ENCODE measurements at regions of chr14 and their contacts with region 1.

Region 1: GRCh38 chr14:45267071-45267470 is 14.1 kb upstream of the MIS18BP1 start:
- DNase-seq: no peak
- H3K4me3 ChIP-seq: no peak overlapping the region
- H3K27ac ChIP-seq: no peak overlapping the region
- H3K4me1 ChIP-seq: no peaks in the 10 kb centered on the region
- H3K27me3 ChIP-seq: no peaks in the 10 kb centered on the region
- CTCF ChIP-seq: no peak
- POLR2A ChIP-seq: no peak

Region 2: DNA sequence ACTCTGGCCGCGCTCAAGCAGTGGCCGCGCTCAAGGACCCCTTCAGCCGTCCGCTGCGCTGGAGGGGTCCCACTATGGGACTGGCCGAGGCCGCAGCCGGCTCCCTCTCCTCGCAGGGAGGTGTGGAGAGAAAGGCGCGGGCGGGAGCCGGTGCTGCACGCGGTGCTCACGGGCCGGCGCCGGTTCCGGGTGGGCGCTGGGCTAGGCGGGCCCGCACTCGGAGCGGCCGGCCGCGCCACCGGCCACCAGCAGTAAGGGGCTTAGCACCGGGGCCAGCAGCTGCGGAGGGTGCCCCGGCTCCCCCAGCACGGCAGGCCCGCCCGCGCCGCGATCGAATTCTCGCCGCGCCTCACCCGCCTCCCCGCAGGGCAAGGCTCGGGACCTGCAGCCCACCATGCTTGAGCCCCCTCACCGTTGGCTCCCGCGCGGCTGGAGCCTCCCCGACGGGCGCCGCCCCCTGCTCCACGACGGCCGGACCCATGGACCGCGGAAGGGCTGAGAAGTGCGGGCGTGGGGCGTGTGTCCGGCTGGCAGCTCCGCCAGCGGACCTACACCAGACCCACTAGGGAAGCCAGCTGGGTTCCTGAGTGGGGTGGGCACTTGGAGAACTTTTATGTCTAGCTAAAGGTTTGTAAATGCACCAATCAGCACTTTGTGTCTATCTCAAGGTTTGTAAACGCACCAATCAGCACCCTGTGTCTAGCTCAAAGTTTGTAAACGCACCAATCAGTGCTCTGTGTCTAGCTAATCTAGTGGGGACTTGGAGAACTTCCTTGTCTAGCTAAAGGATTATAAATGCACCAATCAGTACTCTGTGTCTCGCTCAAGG is 354.8 kb before region 1 on chr14:
- intact Hi-C with region 1: loop called (anchors 5 to 10 kb)
- DNase-seq: peak in 2 of 7 donors; percentile 9 to 17
- H3K4me3 ChIP-seq: peak overlapping the region in 2 of 4 donors; percentile 32 to 74
- H3K27ac ChIP-seq: no peak overlapping the region
- H3K4me1 ChIP-seq: peaks cover 0 to 9% of the 10 kb centered on the region in 2 donors
- H3K27me3 ChIP-seq: no peaks in the 10 kb centered on the region
- CTCF ChIP-seq: no peak
- POLR2A ChIP-seq: no peak